Activated T-helper 1 cell treated with anti-CD3 and anti-CD28 coated beads, Interleukin-12 subunit alpha, Interleukin-12 subunit beta, Interleukin-2, Interleukin-4 antibody, amounts not matched to agents 30 ng/mL and 10 ng/mL and 1 ng/mL, durations not matched to agents 14 hours and 24 hours and 36 hours (primary cell): ENCODE measurements at regions of chr14 and their contacts with region 1.

Region 1: GRCh38 chr14:50726372-50727107 is 58.4 kb upstream of the SAV1 start:
- DNase-seq: peak; percentile 37
- H3K4me3 Mint-ChIP-seq: peak overlapping the region; percentile 52
- H3K27ac Mint-ChIP-seq: peak overlapping the region; percentile 92
- H3K4me1 Mint-ChIP-seq: peaks cover 23% of the 10 kb centered on the region
- H3K27me3 Mint-ChIP-seq: no peaks in the 10 kb centered on the region

Region 2: GRCh38 chr14:50321009-50321660 is 405.4 kb before region 1 on chr14:
- intact Hi-C with region 1: loop called (anchors 1 kb)
- DNase-seq: peak; percentile 68
- H3K4me3 Mint-ChIP-seq: no peak overlapping the region
- H3K27ac Mint-ChIP-seq: no peak overlapping the region
- H3K4me1 Mint-ChIP-seq: peaks cover 20% of the 10 kb centered on the region
- H3K27me3 Mint-ChIP-seq: no peaks in the 10 kb centered on the region

Region 3: GRCh38 chr14:50477760-50478159 is 248.8 kb before region 1 on chr14:
- intact Hi-C with region 1: no loop called
- DNase-seq: no peak
- H3K4me3 Mint-ChIP-seq: no peak overlapping the region
- H3K27ac Mint-ChIP-seq: no peak overlapping the region
- H3K4me1 Mint-ChIP-seq: no peaks in the 10 kb centered on the region
- H3K27me3 Mint-ChIP-seq: no peaks in the 10 kb centered on the region

Region 4: GRCh38 chr14:50607181-50607580 is 119.4 kb before region 1 on chr14:
- intact Hi-C with region 1: loop called (anchors 2 kb)
- DNase-seq: no peak
- H3K4me3 Mint-ChIP-seq: no peak overlapping the region
- H3K27ac Mint-ChIP-seq: peak overlapping the region; percentile 0
- H3K4me1 Mint-ChIP-seq: peaks cover 7% of the 10 kb centered on the region
- H3K27me3 Mint-ChIP-seq: peaks cover 16% of the 10 kb centered on the region

Region 5: DNA sequence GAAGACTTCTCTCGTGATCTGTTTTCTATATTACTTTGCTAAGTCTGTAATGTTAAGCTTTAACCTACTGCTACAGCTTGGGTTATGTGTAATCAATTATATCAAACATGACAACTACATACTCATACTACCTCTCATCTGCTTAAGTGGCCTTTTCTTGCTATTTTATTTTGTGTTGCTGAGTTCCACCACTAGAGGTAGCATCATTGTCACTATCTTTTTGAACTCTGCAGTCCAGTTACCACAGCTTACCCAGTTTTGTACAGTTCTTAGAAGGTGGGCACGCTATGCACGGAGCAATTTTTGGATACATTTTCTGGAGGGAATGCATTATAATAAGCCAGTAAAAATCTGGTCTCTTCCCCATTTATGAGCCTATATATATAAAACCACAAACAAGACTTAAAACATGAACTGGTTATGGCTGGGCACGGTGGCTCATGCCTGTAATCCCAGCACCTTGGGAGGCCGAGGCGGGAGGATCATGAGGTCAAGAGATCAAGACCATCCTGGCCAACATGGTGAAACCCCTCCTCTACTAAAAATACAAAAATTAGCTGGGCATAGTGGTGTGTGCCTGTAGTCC is 106.9 kb before region 1 on chr14:
- intact Hi-C with region 1: no loop called
- DNase-seq: no peak
- H3K4me3 Mint-ChIP-seq: no peak overlapping the region
- H3K27ac Mint-ChIP-seq: no peak overlapping the region
- H3K4me1 Mint-ChIP-seq: no peaks in the 10 kb centered on the region
- H3K27me3 Mint-ChIP-seq: no peaks in the 10 kb centered on the region

Region 6: DNA sequence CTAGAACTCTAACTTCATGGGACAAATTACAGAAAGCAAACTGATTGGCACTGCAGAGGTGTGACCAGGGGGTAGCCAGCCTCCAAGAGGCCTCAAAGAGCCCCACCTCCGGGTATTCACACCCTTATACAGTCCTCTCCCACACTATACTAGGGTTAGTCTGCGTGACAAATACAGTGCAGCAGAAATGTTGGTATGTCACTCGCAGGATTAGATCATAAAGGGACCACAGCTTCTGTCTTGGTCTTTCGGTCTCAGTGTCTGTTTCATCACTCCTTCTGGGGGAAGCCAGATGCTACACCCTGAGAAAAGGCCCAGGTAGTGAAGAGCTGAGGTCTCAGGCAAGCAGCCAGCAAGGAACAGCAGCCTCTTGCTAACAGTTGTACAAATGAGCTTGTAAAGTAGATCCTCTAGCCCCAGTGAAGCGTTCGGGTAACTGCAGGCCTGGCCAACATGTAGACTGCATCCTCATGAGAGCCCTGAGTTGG is 10.4 kb after region 1 on chr14:
- intact Hi-C with region 1: loop called (anchors 1 kb)
- DNase-seq: peak; percentile 18
- H3K4me3 Mint-ChIP-seq: no peak overlapping the region
- H3K27ac Mint-ChIP-seq: peak overlapping the region; percentile 87
- H3K4me1 Mint-ChIP-seq: peaks cover 45% of the 10 kb centered on the region
- H3K27me3 Mint-ChIP-seq: no peaks in the 10 kb centered on the region

Region 7: GRCh38 chr14:50785457-50786063 is 59.0 kb after region 1 on chr14:
- intact Hi-C with region 1: loop called (anchors 2 kb)
- DNase-seq: no peak
- H3K4me3 Mint-ChIP-seq: peak overlapping the region; percentile 56
- H3K27ac Mint-ChIP-seq: peak overlapping the region; percentile 79
- H3K4me1 Mint-ChIP-seq: peaks cover 61% of the 10 kb centered on the region
- H3K27me3 Mint-ChIP-seq: no peaks in the 10 kb centered on the region

Region 8: DNA sequence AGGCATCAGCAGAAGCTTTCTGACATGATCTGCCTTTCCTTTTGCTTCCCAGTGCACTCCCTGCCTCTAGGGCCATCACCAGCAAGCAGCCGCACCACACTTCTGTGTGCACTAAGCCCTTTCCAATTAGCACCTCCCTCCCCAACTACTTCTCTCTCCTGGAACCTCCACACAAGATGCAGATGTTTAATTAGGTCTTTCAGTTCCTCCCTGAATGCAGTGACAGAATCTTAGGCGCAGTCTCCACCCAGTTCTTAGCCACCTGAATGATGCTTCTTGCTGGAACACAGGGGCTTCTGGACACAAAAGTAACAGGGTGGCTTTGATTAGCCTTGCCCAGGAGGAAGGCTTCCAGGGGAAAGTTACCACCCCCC is 71.5 kb after region 1 on chr14:
- intact Hi-C with region 1: no loop called
- DNase-seq: no peak
- H3K4me3 Mint-ChIP-seq: no peak overlapping the region
- H3K27ac Mint-ChIP-seq: no peak overlapping the region
- H3K4me1 Mint-ChIP-seq: peaks cover 23% of the 10 kb centered on the region
- H3K27me3 Mint-ChIP-seq: no peaks in the 10 kb centered on the region

Region 9: DNA sequence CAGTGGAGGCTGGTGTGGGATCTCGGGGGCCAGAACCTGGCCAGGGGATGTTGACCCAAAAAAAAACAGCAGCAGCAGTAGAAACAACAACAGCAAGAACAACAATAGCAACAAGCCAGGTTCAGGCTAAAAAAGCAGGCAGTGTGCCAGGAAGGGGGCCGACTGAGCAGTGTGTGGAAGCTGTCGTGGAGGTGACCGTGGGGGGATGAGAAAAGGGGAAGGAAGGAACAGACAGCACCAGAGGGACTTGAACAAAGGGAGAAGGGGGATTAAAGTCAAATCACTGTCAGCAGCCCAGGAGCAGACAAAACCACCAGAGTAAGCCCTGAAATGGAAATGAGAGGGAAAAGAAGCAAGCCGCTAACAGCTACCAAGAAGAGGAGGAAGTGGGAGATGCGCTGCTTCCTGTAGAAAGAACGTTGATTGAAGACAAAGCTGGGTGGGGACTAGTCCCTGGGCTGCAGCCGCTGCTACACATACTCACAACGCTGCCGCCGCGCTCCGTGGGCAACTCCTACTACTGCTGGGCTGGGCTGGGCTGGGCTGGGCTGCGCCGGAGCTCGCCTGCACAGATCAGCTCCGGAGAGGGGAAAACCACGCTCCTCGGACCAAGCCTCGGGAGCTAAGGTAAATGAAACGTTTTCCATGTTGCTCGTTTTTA is 1133.8 kb after region 1 on chr14 and contains the start of gene GNG2:
- intact Hi-C with region 1: loop called (anchors 10 kb)
- DNase-seq: peak; percentile 77
- H3K4me3 Mint-ChIP-seq: peak within 1 kb of the TSS; percentile 95
- H3K27ac Mint-ChIP-seq: peak within 1 kb of the TSS; percentile 88
- H3K4me1 Mint-ChIP-seq: peaks cover 63% of the 10 kb centered on the region
- H3K27me3 Mint-ChIP-seq: peaks cover 2% of the 10 kb centered on the region
- total RNA-seq, gene GNG2: 126 and 128 TPM in 2 replicates

Region 10: DNA sequence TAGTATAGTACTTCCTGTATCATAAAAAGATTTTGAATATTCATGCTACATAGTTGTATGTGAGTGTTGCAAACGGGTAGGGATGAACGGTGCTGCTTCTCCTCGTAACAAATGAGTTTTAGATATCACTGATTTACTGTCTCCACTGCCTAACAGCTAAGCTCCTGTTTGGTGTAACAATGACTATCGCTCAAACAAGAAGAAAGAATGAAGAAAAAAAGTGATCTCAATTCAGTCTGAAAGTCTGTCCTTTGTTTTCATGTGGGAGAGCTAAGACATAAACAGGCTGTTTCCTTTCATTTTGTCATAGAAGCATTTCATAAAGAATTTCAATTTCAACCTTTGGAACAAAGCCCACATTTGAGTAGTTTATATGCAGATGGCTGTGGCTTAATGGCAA is 1236.7 kb after region 1 on chr14:
- intact Hi-C with region 1: no loop called
- DNase-seq: no peak
- H3K4me3 Mint-ChIP-seq: no peak overlapping the region
- H3K27ac Mint-ChIP-seq: peak overlapping the region; percentile 76
- H3K4me1 Mint-ChIP-seq: peaks cover 46% of the 10 kb centered on the region
- H3K27me3 Mint-ChIP-seq: no peaks in the 10 kb centered on the region